Heart right ventricle (tissue), 16 donors: ENCODE measurements at regions of chr7 and their contacts with region 1.

Region 1: GRCh38 chr7:82449910-82450309 is 6.3 kb upstream of the CACNA2D1 start:
- DNase-seq: no peak
- ATAC-seq: no peak
- H3K4me3 ChIP-seq: no peak overlapping the region
- H3K27ac ChIP-seq: no peak overlapping the region
- H3K4me1 ChIP-seq: no peaks in the 10 kb centered on the region
- H3K27me3 ChIP-seq: peaks cover 0 to 10% (median 0%) of the 10 kb centered on the region in 7 donors
- CTCF ChIP-seq: no peak

Region 2: GRCh38 chr7:82419200-82419599 is 30.7 kb before region 1 on chr7:
- intact Hi-C with region 1: no loop called
- DNase-seq: peak; percentile 44 to 62
- ATAC-seq: peak in 6 of 8 donors; percentile 57 to 86 (median 70)
- H3K4me3 ChIP-seq: no peak overlapping the region
- H3K27ac ChIP-seq: no peak overlapping the region
- H3K4me1 ChIP-seq: peaks cover 0 to 68% (median 11%) of the 10 kb centered on the region in 9 donors
- H3K27me3 ChIP-seq: no peaks in the 10 kb centered on the region
- CTCF ChIP-seq: no peak

Region 3: GRCh38 chr7:82562716-82563404 is 113.0 kb after region 1 on chr7:
- intact Hi-C with region 1: loop called in 1 of 10 experiments (anchors 10 kb)
- DNase-seq: no peak
- ATAC-seq: no peak
- H3K4me3 ChIP-seq: no peak overlapping the region
- H3K27ac ChIP-seq: no peak overlapping the region
- H3K4me1 ChIP-seq: peaks cover 0 to 14% (median 0%) of the 10 kb centered on the region in 9 donors
- H3K27me3 ChIP-seq: no peaks in the 10 kb centered on the region
- CTCF ChIP-seq: no peak

Region 4: DNA sequence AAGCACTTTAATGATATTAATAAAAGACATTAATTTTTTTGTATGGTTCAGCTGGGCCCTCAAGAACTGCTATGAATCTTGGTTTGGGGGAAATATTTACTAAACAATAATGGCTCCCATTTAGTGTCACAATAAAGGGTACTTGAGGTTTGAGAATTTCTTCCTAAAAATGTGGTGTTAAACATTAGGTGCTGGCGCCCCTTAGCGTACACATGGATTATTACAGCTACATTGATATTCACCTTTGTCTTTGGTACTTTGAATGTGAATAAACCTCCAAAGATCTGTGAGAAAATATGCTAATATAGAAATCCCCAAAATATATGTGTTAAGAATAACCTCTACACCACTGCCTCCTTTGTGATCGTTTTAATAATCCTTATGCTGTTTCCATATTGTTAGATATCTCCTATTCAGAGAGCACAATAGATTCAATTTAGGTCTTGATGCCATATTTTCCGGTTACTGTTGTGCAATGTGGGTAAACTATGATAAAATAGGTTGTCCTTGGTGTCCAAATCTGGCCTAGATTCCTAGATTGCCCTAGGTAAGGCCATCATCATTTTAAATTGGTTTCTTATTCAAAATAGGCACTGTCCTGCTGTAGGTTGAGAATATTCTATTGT is 155.4 kb after region 1 on chr7:
- intact Hi-C with region 1: no loop called
- DNase-seq: peak in 1 of 2 donors; percentile 8
- ATAC-seq: no peak
- H3K4me3 ChIP-seq: no peak overlapping the region
- H3K27ac ChIP-seq: no peak overlapping the region
- H3K4me1 ChIP-seq: no peaks in the 10 kb centered on the region
- H3K27me3 ChIP-seq: no peaks in the 10 kb centered on the region
- CTCF ChIP-seq: peak; percentile 55 to 82 (median 70)